ENCODE measurements at regions of chr3 and their contacts with region 1.

Region 1: GRCh38 chr3:52481819-52482521 is 13.2 kb upstream of the STAB1 start:
- DNase-seq: peak in 1 of 3 donors; percentile 30
- ATAC-seq: peak; percentile 43 to 81 (median 48)
- H3K4me3 ChIP-seq: no peak overlapping the region
- H3K27ac ChIP-seq: no peak overlapping the region
- H3K4me1 ChIP-seq: peaks cover 0 to 4% (median 0%) of the 10 kb centered on the region in 4 donors
- H3K27me3 ChIP-seq: no peaks in the 10 kb centered on the region
- CTCF ChIP-seq: peak in 3 of 4 donors; percentile 17 to 34 (median 23)
- POLR2A ChIP-seq: no peak

Region 2: DNA sequence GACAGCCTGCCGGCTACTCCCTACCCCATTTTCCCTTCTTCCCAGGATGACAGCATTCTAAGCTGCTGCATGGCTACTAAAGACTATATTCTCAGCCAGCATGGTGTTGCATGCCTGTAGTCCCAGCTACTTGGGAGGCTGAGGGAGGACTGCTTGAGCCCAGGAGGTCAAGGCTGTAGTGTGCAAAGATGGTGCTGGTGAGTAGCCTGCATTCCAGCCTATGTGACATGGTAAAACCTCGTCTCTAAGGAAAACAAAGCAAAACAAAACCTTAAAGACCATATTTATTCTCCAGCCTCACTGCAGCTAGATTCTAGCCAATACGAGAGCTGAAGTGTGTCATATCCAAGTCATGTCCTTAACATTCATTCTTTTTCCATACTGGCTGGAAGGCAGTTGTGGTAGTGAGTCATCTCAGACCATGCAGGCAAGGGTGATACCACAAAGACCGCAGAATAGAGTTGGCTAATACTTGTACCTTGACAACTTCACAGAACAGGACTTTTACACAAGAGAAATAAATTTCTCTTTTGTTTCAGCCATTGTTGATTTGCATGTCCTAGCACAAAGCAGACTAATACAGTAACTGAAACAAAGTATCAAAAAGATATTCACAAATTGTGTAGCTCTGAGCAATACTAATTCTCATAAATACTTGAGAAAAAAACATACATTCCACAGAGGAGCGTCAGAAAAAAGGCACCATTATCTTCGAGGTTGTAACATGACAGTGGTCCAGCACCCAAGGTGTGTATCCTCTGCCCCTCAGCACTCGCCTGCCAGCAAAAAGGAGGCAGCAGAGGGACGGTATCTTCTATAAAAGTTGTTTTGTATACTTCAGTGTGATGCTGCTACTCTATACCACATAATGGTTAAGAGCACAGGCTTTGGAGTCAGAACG is 188.9 kb after region 1 on chr3:
- intact Hi-C with region 1: loop called in 1 of 2 experiments (anchors 10 kb)
- DNase-seq: no peak
- ATAC-seq: peak in 2 of 4 donors; percentile 30 to 59
- H3K4me3 ChIP-seq: no peak overlapping the region
- H3K27ac ChIP-seq: no peak overlapping the region
- H3K4me1 ChIP-seq: no peaks in the 10 kb centered on the region
- H3K27me3 ChIP-seq: no peaks in the 10 kb centered on the region
- CTCF ChIP-seq: no peak
- POLR2A ChIP-seq: no peak

Region 3: GRCh38 chr3:53194210-53194499 is 712.2 kb after region 1 on chr3:
- intact Hi-C with region 1: no loop called
- DNase-seq: no peak
- ATAC-seq: no peak
- H3K4me3 ChIP-seq: no peak overlapping the region
- H3K27ac ChIP-seq: no peak overlapping the region
- H3K4me1 ChIP-seq: peaks cover 0 to 4% (median 0%) of the 10 kb centered on the region in 4 donors
- H3K27me3 ChIP-seq: no peaks in the 10 kb centered on the region
- CTCF ChIP-seq: no peak
- POLR2A ChIP-seq: no peak

Measured in right lobe of liver (tissue), 6 donors.